AG04449 (cell line): ENCODE measurements at regions of chr22 and their contacts with region 1.

Region 1: GRCh38 chr22:30386960-30387827 is at the start of gene RNF215:
- DNase-seq: no peak
- H3K4me3 ChIP-seq: peak within 1 kb of the TSS; percentile 73
- CTCF ChIP-seq: peak; percentile 91

Region 2: DNA sequence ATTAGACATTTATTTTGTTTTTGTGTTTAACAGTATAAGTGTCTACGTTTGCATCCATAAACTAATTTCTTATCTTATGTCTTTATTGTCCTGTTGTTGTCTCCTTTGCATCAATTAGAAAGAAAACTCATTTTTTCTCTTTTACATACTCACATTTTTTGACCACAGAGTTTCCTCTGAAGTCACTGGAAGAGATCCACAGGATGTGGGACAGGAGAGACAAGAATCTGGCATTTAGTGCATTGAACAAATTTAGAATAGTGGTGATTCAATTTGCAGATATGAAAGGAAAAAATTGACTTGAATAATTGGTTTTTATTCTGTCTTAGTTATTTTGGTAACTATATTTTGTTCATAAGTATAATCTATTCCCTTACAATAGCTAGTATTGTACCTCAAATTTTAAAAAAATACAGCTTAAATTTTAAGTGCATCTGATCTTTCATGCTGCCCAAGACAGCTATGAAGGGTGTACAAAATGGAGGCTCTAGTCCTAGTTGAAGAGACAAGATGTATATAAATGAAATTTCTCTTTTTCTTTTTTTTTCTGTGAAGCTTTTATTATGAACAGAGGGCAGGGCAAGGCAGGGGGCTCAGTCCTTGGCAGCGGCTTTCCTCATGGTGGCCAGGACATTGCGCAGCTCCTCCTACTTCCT is 282.6 kb before region 1 on chr22:
- CTCF ChIA-PET with region 1: interaction called, 27 read pairs
- POLR2A ChIA-PET with region 1: no interaction called
- DNase-seq: no peak
- H3K4me3 ChIP-seq: no peak overlapping the region
- CTCF ChIP-seq: no peak

Region 3: GRCh38 chr22:30326706-30327362 is 60.4 kb before region 1 on chr22 and contains the start of gene TBC1D10A:
- CTCF ChIA-PET with region 1: interaction called, 10 read pairs
- POLR2A ChIA-PET with region 1: no interaction called
- DNase-seq: no peak
- H3K4me3 ChIP-seq: peak within 1 kb of the TSS; percentile 87
- CTCF ChIP-seq: no peak

Region 4: GRCh38 chr22:30408414-30409104 is 21.4 kb after region 1 on chr22:
- CTCF ChIA-PET with region 1: interaction called, 62 read pairs
- POLR2A ChIA-PET with region 1: no interaction called
- DNase-seq: no peak
- H3K4me3 ChIP-seq: no peak overlapping the region
- CTCF ChIP-seq: no peak

Region 5: DNA sequence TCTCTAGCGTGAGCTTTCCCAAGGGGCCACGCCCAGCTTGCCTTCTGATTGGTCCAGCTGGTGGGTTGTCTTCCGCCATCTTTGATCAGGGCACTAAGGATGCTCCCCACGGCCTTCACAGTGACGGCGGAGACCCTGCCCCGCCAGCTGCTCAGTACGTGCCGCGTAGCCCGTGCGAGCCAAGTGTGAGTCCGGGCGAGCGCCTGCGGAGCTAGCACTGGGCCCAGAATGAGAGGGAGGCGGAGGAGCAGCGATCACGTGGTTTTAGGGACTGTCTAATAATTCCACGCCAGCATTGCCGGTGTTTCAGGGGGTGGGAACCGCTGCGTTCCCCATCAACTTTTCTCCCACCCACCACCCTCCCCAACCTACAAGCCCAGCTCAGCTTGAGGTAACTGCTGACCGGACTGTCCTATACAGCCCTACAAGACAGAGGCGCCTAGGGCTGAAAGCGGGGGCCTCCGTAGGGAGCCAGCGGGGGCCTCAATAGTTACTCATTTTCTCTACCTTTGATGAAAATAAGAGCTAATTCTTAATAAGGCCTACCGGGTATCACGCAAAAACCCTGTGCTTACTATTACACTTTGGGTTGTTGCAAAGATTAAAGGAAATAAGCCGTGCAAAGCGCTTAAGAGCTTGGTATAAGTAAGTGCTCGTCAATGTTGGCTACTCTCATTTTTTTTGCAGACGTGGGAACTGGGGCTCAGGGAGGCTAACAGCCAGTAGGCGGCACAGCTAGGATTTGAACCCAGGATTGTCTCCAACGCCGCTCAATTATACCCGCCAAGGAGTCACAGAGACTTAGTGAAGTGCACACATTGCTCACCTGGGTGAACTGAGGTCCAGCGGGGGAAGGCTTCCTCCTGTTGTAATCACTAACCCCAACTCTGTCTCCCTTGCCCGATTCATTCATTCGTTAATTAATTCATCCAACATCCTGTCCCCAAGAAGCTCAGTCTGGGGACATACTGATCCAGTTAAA is 37.1 kb after region 1 on chr22:
- CTCF ChIA-PET with region 1: interaction called, 129 read pairs
- POLR2A ChIA-PET with region 1: interaction called, 4 read pairs
- DNase-seq: peak; percentile 98
- H3K4me3 ChIP-seq: peak overlapping the region; percentile 69
- CTCF ChIP-seq: no peak

Region 6: GRCh38 chr22:30485362-30485988 is 98.3 kb after region 1 on chr22:
- CTCF ChIA-PET with region 1: interaction called, 192 read pairs
- POLR2A ChIA-PET with region 1: no interaction called
- DNase-seq: no peak
- H3K4me3 ChIP-seq: no peak overlapping the region
- CTCF ChIP-seq: peak; percentile 97

Region 7: GRCh38 chr22:31036671-31037550 is 649.7 kb after region 1 on chr22:
- CTCF ChIA-PET with region 1: no interaction called
- POLR2A ChIA-PET with region 1: no interaction called
- DNase-seq: peak; percentile 52
- H3K4me3 ChIP-seq: peak overlapping the region; percentile 21
- CTCF ChIP-seq: peak; percentile 23